ENCODE measurements at regions of chr19 and their contacts with region 1.

Region 1: DNA sequence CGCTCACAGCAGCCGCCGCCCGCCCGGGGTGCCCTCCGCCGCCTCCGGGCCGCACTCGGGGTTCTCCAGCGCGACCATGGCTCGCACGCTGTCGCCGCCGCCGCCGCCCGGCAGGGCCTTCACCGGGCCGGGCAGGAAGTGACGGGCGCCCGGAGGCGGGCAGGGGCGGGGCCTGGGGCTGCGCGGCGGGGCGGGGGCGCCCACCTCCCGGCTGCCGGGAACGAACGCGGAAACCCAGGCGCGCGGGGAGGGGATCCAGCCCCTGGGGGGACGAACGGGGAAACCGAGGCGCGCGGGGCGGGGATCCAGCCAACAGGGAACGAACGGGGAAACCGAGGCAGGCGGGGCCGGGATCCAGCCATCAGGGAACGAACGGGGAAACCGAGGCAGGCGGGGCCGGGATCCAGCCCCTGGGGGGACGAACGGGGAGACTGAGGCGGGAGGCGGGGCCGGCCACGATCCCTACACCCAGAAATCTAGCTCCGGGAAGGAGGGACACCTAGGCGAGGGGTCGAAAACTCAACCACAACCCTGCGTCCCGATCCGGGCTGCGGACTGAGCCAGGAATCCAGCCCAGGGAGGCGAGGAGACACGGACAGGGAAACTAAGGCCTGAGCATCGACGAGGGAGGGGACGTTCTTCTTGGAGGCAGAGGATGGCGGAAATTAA is at the start of gene R3HDM4:
- DNase-seq: peak; percentile 49
- H3K4me3 ChIP-seq: peak within 1 kb of the TSS; percentile 69 to 94 (median 88)
- H3K27ac ChIP-seq: peak within 1 kb of the TSS; percentile 55
- H3K4me1 ChIP-seq: peaks cover 29% of the 10 kb centered on the region
- H3K27me3 ChIP-seq: peaks cover 12% of the 10 kb centered on the region
- CTCF ChIP-seq: no peak
- total RNA-seq, gene R3HDM4: 39.3 to 53.1 TPM

Region 2: GRCh38 chr19:883661-884211 is 29.5 kb before region 1 on chr19:
- CTCF ChIA-PET with region 1: no interaction called
- dilution Hi-C with region 1: no loop called
- in situ Hi-C with region 1: no loop called
- intact Hi-C with region 1: loop called (anchors 2 kb)
- DNase-seq: peak; percentile 78
- H3K4me3 ChIP-seq: no peak overlapping the region
- H3K27ac ChIP-seq: no peak overlapping the region
- H3K4me1 ChIP-seq: peaks cover 25% of the 10 kb centered on the region
- H3K27me3 ChIP-seq: no peaks in the 10 kb centered on the region
- CTCF ChIP-seq: peak; percentile 38 to 52

Region 3: GRCh38 chr19:892243-893050 is 20.8 kb before region 1 on chr19:
- CTCF ChIA-PET with region 1: no interaction called
- dilution Hi-C with region 1: no loop called
- in situ Hi-C with region 1: no loop called
- intact Hi-C with region 1: loop called (anchors 2 kb)
- DNase-seq: no peak
- H3K4me3 ChIP-seq: peak overlapping the region; percentile 81 to 97 (median 96)
- H3K27ac ChIP-seq: peak overlapping the region; percentile 93
- H3K4me1 ChIP-seq: no peaks in the 10 kb centered on the region
- H3K27me3 ChIP-seq: no peaks in the 10 kb centered on the region
- CTCF ChIP-seq: no peak

Region 4: DNA sequence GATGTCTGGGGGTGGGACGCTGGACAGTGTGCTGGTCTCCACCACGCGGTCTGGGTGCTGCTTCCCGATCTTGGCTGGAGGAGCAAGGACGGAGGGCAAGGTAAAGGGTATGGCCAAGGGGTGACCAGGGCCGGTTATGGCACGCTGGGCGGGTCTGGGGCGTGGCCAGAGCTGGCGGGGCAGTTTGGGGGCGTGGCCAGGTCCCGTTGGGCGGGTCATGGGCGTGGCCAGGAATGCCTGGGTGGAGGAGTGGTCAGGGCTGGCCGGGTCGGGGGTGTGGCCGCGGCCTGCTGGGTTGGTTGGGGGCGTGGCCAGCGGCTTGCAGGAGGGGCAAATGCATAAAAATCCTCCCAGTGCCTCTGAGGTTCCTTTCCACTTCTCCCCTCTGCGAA is 209.8 kb after region 1 on chr19:
- CTCF ChIA-PET with region 1: no interaction called
- dilution Hi-C with region 1: no loop called
- in situ Hi-C with region 1: no loop called
- intact Hi-C with region 1: no loop called
- DNase-seq: peak; percentile 69
- H3K4me3 ChIP-seq: no peak overlapping the region
- H3K27ac ChIP-seq: no peak overlapping the region
- H3K4me1 ChIP-seq: peaks cover 14% of the 10 kb centered on the region
- H3K27me3 ChIP-seq: no peaks in the 10 kb centered on the region
- CTCF ChIP-seq: no peak

Region 5: GRCh38 chr19:1507763-1508509 is 594.7 kb after region 1 on chr19:
- CTCF ChIA-PET with region 1: no interaction called
- dilution Hi-C with region 1: no loop called
- in situ Hi-C with region 1: no loop called
- intact Hi-C with region 1: no loop called
- DNase-seq: peak; percentile 89
- H3K4me3 ChIP-seq: peak overlapping the region in 2 of 3 experiments; percentile 45 to 60
- H3K27ac ChIP-seq: no peak overlapping the region
- H3K4me1 ChIP-seq: peaks cover 22% of the 10 kb centered on the region
- H3K27me3 ChIP-seq: no peaks in the 10 kb centered on the region
- CTCF ChIP-seq: no peak

Measured in mammary epithelial cell (primary cell).